Motor neuron (in vitro differentiated cells): ENCODE measurements at regions of chr16 and their contacts with region 1.

Region 1: DNA sequence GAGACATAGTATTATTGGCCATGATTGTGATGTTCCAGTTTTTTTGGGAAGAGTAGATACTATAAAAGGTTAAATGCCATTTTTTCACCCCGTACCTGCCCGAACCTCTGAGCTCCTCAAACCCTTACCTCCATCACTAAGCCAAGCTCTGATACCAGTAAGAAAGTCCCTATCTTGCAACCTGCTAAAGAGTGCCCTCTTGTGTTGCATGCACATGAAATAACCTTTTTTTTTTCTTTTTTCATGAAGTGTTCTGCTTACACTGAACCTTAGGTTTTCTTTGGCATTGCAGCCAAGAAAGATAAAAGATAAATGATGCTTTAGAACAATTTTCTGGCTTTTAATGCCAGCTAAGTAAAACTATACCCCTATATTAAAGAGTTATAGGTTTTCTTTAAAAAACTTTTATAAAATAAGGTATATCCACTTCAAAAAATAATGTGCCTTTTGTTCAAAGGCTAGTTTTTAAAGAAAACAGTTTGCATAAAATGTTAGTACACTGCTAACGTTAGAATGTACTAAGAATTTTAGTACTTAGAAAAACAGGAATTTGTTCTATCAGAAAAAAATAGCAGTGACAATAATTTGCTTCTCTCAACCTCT is 295.3 kb upstream of the PMFBP1 start:
- ATAC-seq: peak; percentile 39 to 82 (median 62)
- H3K4me3 ChIP-seq: no peak overlapping the region
- H3K27ac ChIP-seq: no peak overlapping the region
- H3K4me1 ChIP-seq: peaks cover 3 to 37% of the 10 kb centered on the region in 2 donors

Region 2: GRCh38 chr16:72124761-72125634 is 342.3 kb before region 1 on chr16:
- in situ Hi-C with region 1: loop called in 2 of 9 experiments (anchors 25 kb)
- ATAC-seq: peak; percentile 89 to 97 (median 92)
- H3K4me3 ChIP-seq: no peak overlapping the region
- H3K27ac ChIP-seq: peak overlapping the region; percentile 1 to 58
- H3K4me1 ChIP-seq: peaks cover 9 to 13% of the 10 kb centered on the region in 2 donors

Region 3: GRCh38 chr16:72241930-72242329 is 225.3 kb before region 1 on chr16:
- in situ Hi-C with region 1: loop called in 3 of 9 experiments (anchors 25 kb)
- ATAC-seq: peak; percentile 93 to 98 (median 95)
- H3K4me3 ChIP-seq: no peak overlapping the region
- H3K27ac ChIP-seq: peak overlapping the region in 1 of 2 donors; percentile 23
- H3K4me1 ChIP-seq: peaks cover 27 to 43% of the 10 kb centered on the region in 2 donors

Region 4: DNA sequence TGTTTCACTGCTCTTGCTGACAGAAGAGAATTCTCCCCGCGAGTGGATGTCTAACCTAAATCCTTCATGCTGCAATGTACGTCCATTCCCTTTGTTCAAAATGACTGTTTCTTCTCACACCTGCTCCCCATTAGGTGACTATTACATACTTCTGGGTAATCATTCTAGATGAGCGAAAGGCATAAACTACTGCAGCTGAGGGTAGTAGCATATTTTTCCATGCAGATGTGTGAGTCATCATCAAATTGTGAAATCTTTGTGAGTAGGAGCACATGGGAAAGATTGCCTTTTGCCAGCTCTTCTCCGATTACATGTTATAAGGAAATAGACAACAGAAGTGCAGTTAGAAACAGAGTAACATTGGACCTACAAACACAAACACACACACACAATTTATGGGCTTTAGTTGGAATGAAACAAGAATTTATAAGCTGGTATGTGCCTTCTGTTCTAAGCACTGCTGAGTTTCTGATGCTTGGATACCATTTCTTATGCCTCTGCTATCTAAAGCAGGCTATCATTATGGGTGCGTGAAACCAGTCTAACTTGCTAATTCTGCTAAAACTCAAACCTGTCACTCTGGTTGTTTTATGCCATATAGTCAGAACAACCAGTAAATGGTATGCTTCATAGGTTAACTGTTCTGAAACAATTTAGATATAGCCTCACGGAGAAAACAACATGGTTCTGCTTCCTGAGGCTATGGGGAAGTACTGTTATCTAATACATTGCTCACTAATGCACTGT is 1482.5 kb after region 1 on chr16:
- in situ Hi-C with region 1: no loop called
- ATAC-seq: peak; percentile 69 to 97 (median 76)
- H3K4me3 ChIP-seq: no peak overlapping the region
- H3K27ac ChIP-seq: no peak overlapping the region
- H3K4me1 ChIP-seq: peaks cover 7 to 12% of the 10 kb centered on the region in 2 donors